ENCODE measurements at regions of chr11 and their contacts with region 1.

Region 1: GRCh38 chr11:15101072-15101709 is 13.5 kb upstream of the INSC start:
- DNase-seq: no peak
- ATAC-seq: peak; percentile 82

Region 2: DNA sequence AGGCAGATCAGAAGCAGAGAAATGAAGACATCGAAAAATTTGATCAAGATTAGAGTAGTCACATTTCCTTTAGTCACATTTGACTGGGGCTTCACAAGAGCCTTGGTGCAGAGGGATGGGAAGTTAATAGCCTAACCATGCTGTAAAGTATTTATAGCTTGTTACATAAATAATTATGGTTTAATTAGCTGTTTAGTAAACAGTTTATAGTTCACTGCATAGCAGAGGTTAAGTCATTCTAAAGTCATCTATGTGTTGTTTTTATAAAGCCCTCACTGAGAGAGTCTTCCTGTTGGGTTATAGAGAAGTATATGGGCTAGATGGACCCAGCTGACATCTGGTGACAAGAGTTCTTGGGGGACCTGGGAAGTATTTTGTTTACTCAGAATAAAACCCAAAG is 60.6 kb after region 1 on chr11:
- intact Hi-C with region 1: loop called (anchors 5 kb)
- DNase-seq: no peak
- ATAC-seq: no peak

Region 3: GRCh38 chr11:15208378-15209222 is 107.4 kb after region 1 on chr11:
- intact Hi-C with region 1: loop called (anchors 1 kb)
- DNase-seq: peak; percentile 88
- ATAC-seq: peak; percentile 81

Measured in Right ventricle myocardium inferior (tissue), 1 donor.